OCI-LY7 (cell line): ENCODE measurements at regions of chr17 and their contacts with region 1.

Region 1: DNA sequence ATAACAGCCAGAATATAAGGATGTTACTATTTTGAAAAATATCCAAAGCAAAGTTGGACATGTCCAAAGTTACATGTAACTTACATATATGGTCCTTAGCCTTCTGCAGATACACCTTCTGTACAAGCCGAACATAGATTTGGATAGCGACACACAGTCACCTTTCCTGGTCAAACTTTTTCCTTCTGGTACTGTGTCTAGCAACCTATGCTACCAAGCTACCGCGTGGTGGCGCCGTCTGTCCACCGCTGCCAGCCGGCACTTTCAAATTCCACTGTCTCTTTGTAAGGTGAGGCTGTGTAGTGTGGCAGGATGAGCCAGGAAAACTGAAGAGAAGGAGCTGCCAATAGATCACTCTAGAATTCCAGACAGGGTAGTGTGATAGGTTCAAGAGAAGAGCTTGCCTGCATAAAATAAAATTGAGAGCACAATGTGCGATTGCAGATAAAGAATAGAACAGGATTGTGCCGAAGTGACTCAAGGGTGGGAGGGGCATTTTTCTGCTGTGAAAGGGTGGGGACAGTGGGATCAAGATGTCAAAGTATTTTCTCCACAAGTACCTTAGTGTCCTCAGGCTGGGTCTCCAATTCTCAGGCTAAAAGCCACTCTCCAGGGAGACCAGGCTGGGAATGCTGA is 366.9 kb downstream of the SLC39A11 start:
- DNase-seq: peak; percentile 80
- H3K4me3 ChIP-seq: peak overlapping the region; percentile 22
- H3K27ac ChIP-seq: peak overlapping the region; percentile 78
- H3K4me1 ChIP-seq: peaks cover 47% of the 10 kb centered on the region
- CTCF ChIP-seq: peak; percentile 100

Region 2: DNA sequence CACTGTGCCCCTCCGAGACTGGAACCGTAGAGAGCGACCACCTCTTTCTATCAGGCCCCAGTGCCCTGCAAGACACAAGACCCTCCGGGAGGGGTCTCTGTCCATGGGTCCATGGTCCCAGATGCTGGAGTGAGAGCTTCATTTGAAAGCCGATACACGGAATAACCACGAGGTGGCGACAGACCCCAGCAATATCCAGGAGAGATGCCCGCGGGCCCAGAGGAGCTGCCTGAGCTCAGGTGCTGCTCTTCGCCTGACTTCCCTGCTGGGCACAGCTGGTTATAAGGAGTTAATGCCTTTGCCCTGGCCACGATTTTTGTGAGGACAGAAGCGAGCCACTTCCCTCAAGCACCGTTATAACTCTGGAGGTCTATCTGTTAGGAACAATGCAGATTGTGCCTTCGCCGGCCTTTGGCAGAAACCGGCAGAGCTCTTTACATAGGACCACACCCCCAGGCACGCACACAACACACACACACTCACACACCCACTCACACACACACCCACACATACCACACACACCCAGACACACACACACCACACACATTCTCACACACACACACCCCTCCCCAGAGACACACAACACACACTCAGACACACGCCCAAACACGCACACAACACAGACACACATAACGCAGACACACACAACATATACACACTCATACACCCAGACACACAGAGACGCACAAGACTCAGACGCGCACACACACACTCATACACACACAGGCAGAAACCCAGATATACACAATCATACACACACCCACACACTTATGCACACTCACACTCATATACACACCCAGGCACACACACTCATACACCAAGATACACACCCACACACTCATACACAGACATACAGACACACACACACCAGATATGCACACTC is 168.4 kb before region 1 on chr17:
- CTCF ChIA-PET with region 1: interaction called, 8 read pairs
- POLR2A ChIA-PET with region 1: interaction called, 3 read pairs
- intact Hi-C with region 1: loop called (anchors 2 kb)
- DNase-seq: peak; percentile 74
- H3K4me3 ChIP-seq: no peak overlapping the region
- H3K27ac ChIP-seq: no peak overlapping the region
- H3K4me1 ChIP-seq: no peaks in the 10 kb centered on the region
- CTCF ChIP-seq: peak; percentile 97

Region 3: DNA sequence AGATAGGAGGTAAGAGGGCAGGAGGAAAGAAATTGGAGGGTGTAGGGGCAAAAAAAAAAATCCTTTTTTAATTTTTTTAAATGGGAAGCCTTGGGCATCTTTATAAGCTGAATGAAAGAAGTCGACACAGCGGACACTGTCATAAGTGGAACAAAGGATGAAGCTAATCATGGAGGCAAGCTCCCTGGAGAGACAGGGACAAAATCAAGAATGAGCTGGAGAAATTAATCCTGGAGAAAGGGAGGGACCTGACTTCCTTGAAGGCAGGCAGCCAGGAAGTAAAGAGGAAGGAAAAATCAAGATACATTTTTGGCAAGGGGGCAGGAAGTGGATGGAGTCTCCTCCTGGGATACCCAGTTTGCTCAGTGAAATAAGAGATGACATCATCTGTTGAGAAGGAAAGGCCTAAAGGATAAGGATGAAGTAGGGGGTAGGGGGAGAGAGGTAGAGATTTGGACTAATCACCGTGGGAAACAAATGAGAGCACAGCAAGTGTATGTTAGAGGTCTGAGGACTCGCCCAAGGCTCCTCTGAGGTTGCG is 187.7 kb after region 1 on chr17:
- CTCF ChIA-PET with region 1: no interaction called
- POLR2A ChIA-PET with region 1: no interaction called
- intact Hi-C with region 1: no loop called
- DNase-seq: no peak
- H3K4me3 ChIP-seq: no peak overlapping the region
- H3K27ac ChIP-seq: no peak overlapping the region
- H3K4me1 ChIP-seq: no peaks in the 10 kb centered on the region
- CTCF ChIP-seq: no peak

Region 4: DNA sequence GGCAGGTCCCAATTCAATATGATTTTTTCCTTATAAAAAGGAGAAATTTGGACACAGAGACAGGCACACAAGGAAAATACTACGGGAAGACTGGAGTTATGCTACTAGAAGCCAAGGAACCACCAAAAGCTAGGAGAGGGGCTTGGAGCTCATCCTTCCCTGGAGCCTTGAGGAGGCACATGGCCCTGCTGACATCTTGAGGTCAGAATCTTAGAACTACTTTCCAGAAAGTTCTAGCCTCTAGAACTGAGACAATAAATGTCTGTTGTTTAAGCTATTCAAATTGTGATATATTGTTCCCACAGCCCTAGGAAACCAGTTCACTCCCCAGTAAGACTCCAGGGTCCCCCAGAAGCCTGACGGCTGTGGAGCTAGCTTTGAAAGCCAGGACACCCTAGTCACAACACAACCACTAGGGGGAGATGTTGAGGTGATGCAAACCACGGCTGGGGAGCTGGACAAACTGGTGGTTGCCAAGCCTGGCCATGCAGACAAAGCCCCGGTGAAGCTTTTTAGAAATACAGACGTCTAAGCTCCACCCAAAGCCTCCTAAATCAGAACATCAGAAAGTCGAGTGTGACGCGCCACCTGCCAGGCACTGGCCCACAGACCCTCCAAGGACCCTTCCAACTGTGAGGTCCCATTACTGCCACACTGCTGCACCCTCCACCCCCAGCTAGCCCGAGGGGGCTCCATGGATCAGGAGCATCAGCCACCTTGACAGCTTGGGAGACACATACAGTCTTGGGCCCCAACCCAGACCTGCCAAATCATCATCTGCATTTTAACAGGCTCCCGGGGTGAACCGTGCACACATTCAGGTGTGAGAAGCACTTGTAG is 260.6 kb after region 1 on chr17:
- CTCF ChIA-PET with region 1: interaction called, 9 read pairs
- POLR2A ChIA-PET with region 1: interaction called, 10 read pairs
- intact Hi-C with region 1: loop called (anchors 1 kb)
- DNase-seq: peak; percentile 81
- H3K4me3 ChIP-seq: no peak overlapping the region
- H3K27ac ChIP-seq: no peak overlapping the region
- H3K4me1 ChIP-seq: no peaks in the 10 kb centered on the region
- CTCF ChIP-seq: peak; percentile 100

Region 5: DNA sequence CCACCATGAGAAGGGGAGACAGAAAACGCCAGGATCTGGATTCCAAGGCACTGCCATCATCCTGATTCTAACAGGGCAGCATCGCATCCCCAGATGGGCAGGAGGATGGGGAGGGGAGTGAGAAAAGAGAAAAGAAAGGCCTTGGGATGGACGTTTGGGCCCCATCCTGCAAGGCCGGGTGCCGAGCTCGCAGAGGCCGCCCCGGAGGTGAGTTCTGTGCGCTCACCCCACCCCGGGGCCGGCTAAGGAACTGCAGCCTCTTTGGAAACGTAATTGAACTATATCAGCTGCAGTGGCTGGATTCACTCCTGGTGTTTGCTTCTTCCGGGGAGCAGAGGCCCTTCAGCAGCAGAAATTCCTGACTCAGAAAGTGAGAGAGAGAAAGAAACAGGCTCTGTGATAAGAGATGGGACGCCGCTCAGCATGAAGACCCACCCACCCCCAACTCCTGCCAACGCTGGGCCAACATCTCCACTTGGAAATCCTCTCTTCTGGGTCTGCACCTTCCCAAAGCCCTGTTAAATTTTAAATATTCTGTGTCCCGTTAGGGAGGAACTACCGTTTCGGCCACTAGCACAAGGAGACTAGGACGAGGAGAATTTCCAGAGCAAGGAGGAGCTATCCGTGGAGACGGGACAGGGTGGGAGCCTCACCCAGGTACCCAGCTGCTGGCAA is 430.8 kb after region 1 on chr17:
- CTCF ChIA-PET with region 1: interaction called, 22 read pairs
- POLR2A ChIA-PET with region 1: interaction called, 16 read pairs
- intact Hi-C with region 1: loop called (anchors 1 kb)
- DNase-seq: peak; percentile 69
- H3K4me3 ChIP-seq: no peak overlapping the region
- H3K27ac ChIP-seq: no peak overlapping the region
- H3K4me1 ChIP-seq: peaks cover 23% of the 10 kb centered on the region
- CTCF ChIP-seq: peak; percentile 82

Region 6: GRCh38 chr17:73231841-73232586 is 506.5 kb after region 1 on chr17:
- CTCF ChIA-PET with region 1: interaction called, 9 read pairs
- POLR2A ChIA-PET with region 1: interaction called, 3 read pairs
- intact Hi-C with region 1: loop called (anchors 2 kb)
- DNase-seq: peak; percentile 99
- H3K4me3 ChIP-seq: peak overlapping the region; percentile 83
- H3K27ac ChIP-seq: peak overlapping the region; percentile 43
- H3K4me1 ChIP-seq: peaks cover 51% of the 10 kb centered on the region
- CTCF ChIP-seq: no peak

Region 7: GRCh38 chr17:73371285-73371684 is 645.7 kb after region 1 on chr17:
- CTCF ChIA-PET with region 1: interaction called, 14 read pairs
- POLR2A ChIA-PET with region 1: interaction called, 5 read pairs
- intact Hi-C with region 1: loop called (anchors 1 kb)
- DNase-seq: no peak
- H3K4me3 ChIP-seq: no peak overlapping the region
- H3K27ac ChIP-seq: no peak overlapping the region
- H3K4me1 ChIP-seq: no peaks in the 10 kb centered on the region
- CTCF ChIP-seq: no peak